Prostate gland (tissue), 2 donors: ENCODE measurements at regions of chr13 and their contacts with region 1.

Region 1: GRCh38 chr13:23921451-23921888 is 24.2 kb upstream of the C1QTNF9B start:
- DNase-seq: peak; percentile 28
- H3K4me3 ChIP-seq: no peak overlapping the region
- H3K27ac ChIP-seq: no peak overlapping the region
- H3K4me1 ChIP-seq: no peaks in the 10 kb centered on the region
- H3K27me3 ChIP-seq: no peaks in the 10 kb centered on the region
- CTCF ChIP-seq: peak; percentile 38 to 79 (median 71)
- POLR2A ChIP-seq: no peak

Region 2: GRCh38 chr13:23833733-23834626 is 87.5 kb before region 1 on chr13:
- intact Hi-C with region 1: no loop called
- DNase-seq: no peak
- H3K4me3 ChIP-seq: no peak overlapping the region
- H3K27ac ChIP-seq: peak overlapping the region; percentile 10 to 17
- H3K4me1 ChIP-seq: no peaks in the 10 kb centered on the region
- H3K27me3 ChIP-seq: no peaks in the 10 kb centered on the region
- CTCF ChIP-seq: no peak
- POLR2A ChIP-seq: no peak

Region 3: DNA sequence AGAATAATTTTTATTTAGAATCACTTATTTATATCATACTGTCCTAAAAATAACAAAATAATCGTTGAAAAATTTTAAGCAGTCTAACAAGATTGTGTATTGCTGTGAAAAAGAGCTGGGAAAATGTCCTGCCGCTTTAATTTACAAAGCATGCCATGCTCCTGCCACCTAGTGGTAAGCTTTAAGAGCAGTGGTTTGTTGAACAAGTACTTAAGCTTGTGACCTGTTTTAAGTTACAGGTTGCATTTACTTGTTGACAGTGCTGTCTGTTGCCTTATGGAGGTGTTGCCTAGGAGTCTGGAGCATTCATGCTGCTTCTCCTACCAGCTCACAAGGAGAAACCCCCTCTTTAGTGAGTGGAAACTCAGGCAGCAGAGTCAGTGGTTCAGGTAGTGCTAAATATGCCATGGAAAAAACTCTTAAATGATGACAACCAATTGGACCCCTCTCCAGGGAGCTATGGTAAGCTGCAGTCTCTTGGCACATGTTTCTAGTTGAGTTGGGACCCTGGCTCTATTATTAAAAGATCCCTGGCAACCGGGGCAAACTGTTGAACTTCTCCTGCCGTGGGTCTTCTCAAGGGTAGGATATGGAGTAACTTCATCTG is 307.5 kb after region 1 on chr13:
- intact Hi-C with region 1: loop called (anchors 5 kb)
- DNase-seq: no peak
- H3K4me3 ChIP-seq: no peak overlapping the region
- H3K27ac ChIP-seq: no peak overlapping the region
- H3K4me1 ChIP-seq: no peaks in the 10 kb centered on the region
- H3K27me3 ChIP-seq: no peaks in the 10 kb centered on the region
- CTCF ChIP-seq: peak; percentile 55 to 74 (median 67)
- POLR2A ChIP-seq: no peak